Activated CD4-positive, alpha-beta T cell treated with anti-CD3 and anti-CD28 coated beads, Interleukin-2, amount 10 ng/mL, durations not matched to agents 7 days and 5 days (primary cell): ENCODE measurements at regions of chr7 and their contacts with region 1.

Region 1: DNA sequence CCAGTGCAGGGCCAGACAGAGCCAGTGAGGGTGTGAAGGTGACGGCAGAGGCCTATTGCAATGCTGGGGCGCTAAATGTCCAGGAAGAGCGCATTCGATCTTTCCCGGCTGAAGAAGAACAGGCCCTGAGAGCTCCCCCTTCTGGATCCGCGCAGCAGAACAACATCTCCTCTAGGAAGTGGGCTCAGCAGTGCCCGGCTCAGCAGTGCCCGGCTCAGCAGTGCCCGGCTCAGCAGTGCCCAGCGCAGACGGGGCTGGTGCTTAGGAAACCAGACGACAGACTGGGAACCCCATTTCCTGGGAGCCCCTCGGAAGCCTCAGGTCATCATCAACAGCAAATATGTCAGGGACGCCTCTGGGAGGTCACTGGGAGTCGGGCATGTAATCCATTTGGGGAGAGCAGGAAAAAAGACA is 4.7 kb upstream of the NOS3 start:
- DNase-seq: peak; percentile 63
- H3K4me3 Mint-ChIP-seq: no peak overlapping the region
- H3K27ac Mint-ChIP-seq: no peak overlapping the region
- H3K4me1 Mint-ChIP-seq: peaks cover 27% of the 10 kb centered on the region
- H3K27me3 Mint-ChIP-seq: peaks cover 35% of the 10 kb centered on the region

Region 2: GRCh38 chr7:150962553-150963399 is 23.3 kb before region 1 on chr7:
- CTCF ChIA-PET with region 1: interaction called, 13 read pairs
- POLR2A ChIA-PET with region 1: interaction called, 3 read pairs
- DNase-seq: peak; percentile 65
- H3K4me3 Mint-ChIP-seq: no peak overlapping the region
- H3K27ac Mint-ChIP-seq: no peak overlapping the region
- H3K4me1 Mint-ChIP-seq: peaks cover 14% of the 10 kb centered on the region
- H3K27me3 Mint-ChIP-seq: peaks cover 27% of the 10 kb centered on the region